ENCODE measurements at regions of chrX and their contacts with region 1.

Region 1: DNA sequence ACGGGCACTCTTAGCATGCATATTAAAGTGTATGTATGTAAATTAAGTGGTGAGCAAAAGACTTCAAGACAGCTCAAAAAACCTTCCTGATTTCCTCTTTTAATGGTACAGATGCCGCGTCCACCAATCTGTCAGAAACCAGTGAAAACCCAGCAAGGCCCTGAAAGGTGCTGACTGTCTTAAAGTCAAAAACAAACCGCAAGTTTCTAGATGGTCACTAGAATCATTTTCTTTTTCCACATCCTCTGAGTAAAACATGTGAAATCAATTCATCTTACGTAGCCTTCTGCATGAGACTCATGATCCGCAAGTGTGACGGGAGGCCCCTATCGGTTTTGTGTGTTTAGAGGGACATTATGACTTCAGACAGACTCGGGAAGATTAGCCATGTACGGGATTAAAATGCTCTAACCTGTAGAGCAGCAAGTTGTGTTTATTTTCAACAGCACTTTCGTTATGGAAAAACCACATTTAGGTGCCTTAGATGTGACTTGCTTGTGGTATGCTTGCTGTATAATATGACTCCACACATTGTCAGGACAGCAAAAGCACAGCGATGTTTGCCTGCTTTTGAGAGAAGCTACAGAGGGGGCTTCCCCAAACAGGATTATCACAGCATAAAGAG is 88.2 kb upstream of the STS start:
- DNase-seq: no peak
- H3K4me3 Mint-ChIP-seq: peak overlapping the region; percentile 26
- H3K27ac Mint-ChIP-seq: peak overlapping the region; percentile 55
- H3K4me1 Mint-ChIP-seq: peaks cover 23% of the 10 kb centered on the region
- H3K27me3 Mint-ChIP-seq: no peaks in the 10 kb centered on the region

Region 2: GRCh38 chrX:7083468-7084396 is 24.4 kb after region 1 on chrX:
- intact Hi-C with region 1: loop called (anchors 1 kb)
- DNase-seq: peak; percentile 63
- H3K4me3 Mint-ChIP-seq: peak overlapping the region; percentile 63
- H3K27ac Mint-ChIP-seq: peak overlapping the region; percentile 88
- H3K4me1 Mint-ChIP-seq: peaks cover 46% of the 10 kb centered on the region
- H3K27me3 Mint-ChIP-seq: no peaks in the 10 kb centered on the region

Region 3: GRCh38 chrX:7108030-7108429 is 48.7 kb after region 1 on chrX:
- intact Hi-C with region 1: no loop called
- DNase-seq: no peak
- H3K4me3 Mint-ChIP-seq: no peak overlapping the region
- H3K27ac Mint-ChIP-seq: no peak overlapping the region
- H3K4me1 Mint-ChIP-seq: peaks cover 23% of the 10 kb centered on the region
- H3K27me3 Mint-ChIP-seq: no peaks in the 10 kb centered on the region